Natural killer cell (primary cell): ENCODE measurements at regions of chr11 and their contacts with region 1.

Region 1: GRCh38 chr11:118689851-118690552 is 10.6 kb upstream of the TREH start:
- DNase-seq: peak; percentile 80 to 93
- ATAC-seq: peak; percentile 82 to 93 (median 86)
- H3K4me3 ChIP-seq: peak overlapping the region; percentile 27
- H3K4me3 Mint-ChIP-seq: peak overlapping the region; percentile 83
- H3K27ac ChIP-seq: no peak overlapping the region
- H3K27ac Mint-ChIP-seq: peak overlapping the region; percentile 57 to 82
- H3K4me1 ChIP-seq: peaks cover 56% of the 10 kb centered on the region
- H3K4me1 Mint-ChIP-seq: peaks cover 34 to 57% of the 10 kb centered on the region in 2 donors
- H3K27me3 ChIP-seq: no peaks in the 10 kb centered on the region
- H3K27me3 Mint-ChIP-seq: peaks cover 7% of the 10 kb centered on the region in 2 donors
- CTCF ChIP-seq: peak; percentile 98

Region 2: GRCh38 chr11:118572061-118572980 is 117.7 kb before region 1 on chr11 and contains the start of gene ARCN1:
- intact Hi-C with region 1: no loop called
- DNase-seq: peak; percentile 68 to 90
- ATAC-seq: peak; percentile 83 to 91 (median 89)
- H3K4me3 ChIP-seq: peak within 1 kb of the TSS; percentile 77
- H3K4me3 Mint-ChIP-seq: peak within 1 kb of the TSS; percentile 95
- H3K27ac ChIP-seq: peak within 1 kb of the TSS; percentile 98
- H3K27ac Mint-ChIP-seq: peak within 1 kb of the TSS; percentile 89 to 97
- H3K4me1 ChIP-seq: peaks cover 14% of the 10 kb centered on the region
- H3K4me1 Mint-ChIP-seq: peaks cover 46 to 47% of the 10 kb centered on the region in 2 donors
- H3K27me3 ChIP-seq: no peaks in the 10 kb centered on the region
- H3K27me3 Mint-ChIP-seq: no peaks in the 10 kb centered on the region
- CTCF ChIP-seq: no peak
- total RNA-seq, gene ARCN1: 72.9 to 88.6 (median 88.4) TPM

Region 3: GRCh38 chr11:118592616-118593367 is 97.2 kb before region 1 on chr11:
- intact Hi-C with region 1: no loop called
- DNase-seq: no peak
- ATAC-seq: no peak
- H3K4me3 ChIP-seq: no peak overlapping the region
- H3K4me3 Mint-ChIP-seq: no peak overlapping the region
- H3K27ac ChIP-seq: no peak overlapping the region
- H3K27ac Mint-ChIP-seq: peak overlapping the region in 1 of 2 donors; percentile 19
- H3K4me1 ChIP-seq: no peaks in the 10 kb centered on the region
- H3K4me1 Mint-ChIP-seq: peaks cover 6 to 7% of the 10 kb centered on the region in 2 donors
- H3K27me3 ChIP-seq: no peaks in the 10 kb centered on the region
- H3K27me3 Mint-ChIP-seq: no peaks in the 10 kb centered on the region
- CTCF ChIP-seq: no peak

Region 4: DNA sequence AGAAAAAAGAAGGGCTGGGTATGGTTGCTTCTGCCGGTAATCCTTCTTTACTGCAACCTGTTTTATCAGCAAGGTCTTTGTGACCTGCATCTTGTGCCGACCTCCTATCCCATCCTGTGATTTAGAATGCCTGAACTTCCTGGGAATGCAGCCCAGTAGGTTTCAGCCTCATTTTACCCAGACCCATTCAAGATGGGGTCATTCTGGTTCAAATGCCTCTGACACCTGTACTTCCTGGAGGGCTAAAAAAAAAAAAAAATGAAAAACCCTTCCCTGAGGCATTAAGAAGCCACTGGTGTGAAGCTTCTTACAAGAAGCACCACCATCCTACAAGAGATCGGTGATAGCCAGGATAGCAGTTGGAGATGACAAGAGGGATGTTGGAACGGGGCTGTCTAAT is 44.0 kb after region 1 on chr11:
- intact Hi-C with region 1: loop called (anchors 5 kb)
- DNase-seq: no peak
- ATAC-seq: no peak
- H3K4me3 ChIP-seq: no peak overlapping the region
- H3K4me3 Mint-ChIP-seq: no peak overlapping the region
- H3K27ac ChIP-seq: no peak overlapping the region
- H3K27ac Mint-ChIP-seq: no peak overlapping the region
- H3K4me1 ChIP-seq: no peaks in the 10 kb centered on the region
- H3K4me1 Mint-ChIP-seq: no peaks in the 10 kb centered on the region
- H3K27me3 ChIP-seq: no peaks in the 10 kb centered on the region
- H3K27me3 Mint-ChIP-seq: peaks cover 13 to 17% of the 10 kb centered on the region in 2 donors
- CTCF ChIP-seq: no peak

Region 5: DNA sequence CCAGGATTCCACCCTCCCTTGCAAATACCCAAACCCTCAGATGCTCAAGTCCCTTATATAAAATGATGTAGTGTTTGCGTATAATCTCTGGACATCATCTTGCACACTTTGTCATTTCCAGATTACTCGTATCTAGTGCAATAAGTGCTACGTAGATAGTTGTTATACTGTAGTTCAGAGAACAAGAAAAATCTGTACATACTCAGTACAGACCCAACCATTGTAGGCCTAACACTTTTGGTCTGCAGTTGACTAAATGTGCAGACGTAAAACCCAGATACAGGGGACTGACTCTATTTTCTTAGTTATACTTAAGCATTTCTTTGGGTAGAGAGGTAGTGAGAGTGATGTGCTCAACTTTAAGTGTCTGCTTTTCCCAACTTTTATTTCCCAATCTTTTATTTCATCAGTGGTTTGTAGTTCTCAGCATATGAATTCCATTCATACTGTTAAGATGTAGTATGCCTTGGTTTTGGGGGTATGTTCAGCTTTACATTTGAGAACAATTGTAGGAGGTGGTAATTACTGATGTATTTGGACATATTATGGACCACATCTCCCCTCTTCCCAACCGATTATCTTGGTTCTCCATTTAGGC is 57.1 kb after region 1 on chr11:
- intact Hi-C with region 1: no loop called
- DNase-seq: no peak
- ATAC-seq: no peak
- H3K4me3 ChIP-seq: no peak overlapping the region
- H3K4me3 Mint-ChIP-seq: no peak overlapping the region
- H3K27ac ChIP-seq: no peak overlapping the region
- H3K27ac Mint-ChIP-seq: peak overlapping the region; percentile 70 to 74
- H3K4me1 ChIP-seq: no peaks in the 10 kb centered on the region
- H3K4me1 Mint-ChIP-seq: peaks cover 14 to 17% of the 10 kb centered on the region in 2 donors
- H3K27me3 ChIP-seq: no peaks in the 10 kb centered on the region
- H3K27me3 Mint-ChIP-seq: no peaks in the 10 kb centered on the region
- CTCF ChIP-seq: no peak

Region 6: GRCh38 chr11:118791111-118791965 is 101.3 kb after region 1 on chr11 and contains the start of gene DDX6:
- intact Hi-C with region 1: loop called (anchors 2 kb)
- DNase-seq: peak; percentile 87 to 93
- ATAC-seq: peak; percentile 63 to 83 (median 74)
- H3K4me3 ChIP-seq: peak within 1 kb of the TSS; percentile 79
- H3K4me3 Mint-ChIP-seq: peak within 1 kb of the TSS; percentile 98
- H3K27ac ChIP-seq: peak within 1 kb of the TSS; percentile 97
- H3K27ac Mint-ChIP-seq: peak within 1 kb of the TSS; percentile 99
- H3K4me1 ChIP-seq: peaks cover 40% of the 10 kb centered on the region
- H3K4me1 Mint-ChIP-seq: peaks cover 30 to 47% of the 10 kb centered on the region in 2 donors
- H3K27me3 ChIP-seq: no peaks in the 10 kb centered on the region
- H3K27me3 Mint-ChIP-seq: no peaks in the 10 kb centered on the region
- CTCF ChIP-seq: no peak
- total RNA-seq, gene DDX6: 350 to 369 (median 364) TPM

Region 7: GRCh38 chr11:118928108-118928870 is 238.3 kb after region 1 on chr11:
- intact Hi-C with region 1: loop called (anchors 2 kb)
- DNase-seq: peak; percentile 94 to 99
- ATAC-seq: peak; percentile 57 to 80 (median 65)
- H3K4me3 ChIP-seq: peak overlapping the region; percentile 89
- H3K4me3 Mint-ChIP-seq: peak overlapping the region; percentile 96
- H3K27ac ChIP-seq: peak overlapping the region; percentile 98
- H3K27ac Mint-ChIP-seq: peak overlapping the region; percentile 95 to 96
- H3K4me1 ChIP-seq: peaks cover 56% of the 10 kb centered on the region
- H3K4me1 Mint-ChIP-seq: peaks cover 47 to 62% of the 10 kb centered on the region in 2 donors
- H3K27me3 ChIP-seq: no peaks in the 10 kb centered on the region
- H3K27me3 Mint-ChIP-seq: peaks cover 0 to 3% of the 10 kb centered on the region in 2 donors
- CTCF ChIP-seq: peak; percentile 89